ENCODE measurements at regions of chr19 and their contacts with region 1.

Region 1: DNA sequence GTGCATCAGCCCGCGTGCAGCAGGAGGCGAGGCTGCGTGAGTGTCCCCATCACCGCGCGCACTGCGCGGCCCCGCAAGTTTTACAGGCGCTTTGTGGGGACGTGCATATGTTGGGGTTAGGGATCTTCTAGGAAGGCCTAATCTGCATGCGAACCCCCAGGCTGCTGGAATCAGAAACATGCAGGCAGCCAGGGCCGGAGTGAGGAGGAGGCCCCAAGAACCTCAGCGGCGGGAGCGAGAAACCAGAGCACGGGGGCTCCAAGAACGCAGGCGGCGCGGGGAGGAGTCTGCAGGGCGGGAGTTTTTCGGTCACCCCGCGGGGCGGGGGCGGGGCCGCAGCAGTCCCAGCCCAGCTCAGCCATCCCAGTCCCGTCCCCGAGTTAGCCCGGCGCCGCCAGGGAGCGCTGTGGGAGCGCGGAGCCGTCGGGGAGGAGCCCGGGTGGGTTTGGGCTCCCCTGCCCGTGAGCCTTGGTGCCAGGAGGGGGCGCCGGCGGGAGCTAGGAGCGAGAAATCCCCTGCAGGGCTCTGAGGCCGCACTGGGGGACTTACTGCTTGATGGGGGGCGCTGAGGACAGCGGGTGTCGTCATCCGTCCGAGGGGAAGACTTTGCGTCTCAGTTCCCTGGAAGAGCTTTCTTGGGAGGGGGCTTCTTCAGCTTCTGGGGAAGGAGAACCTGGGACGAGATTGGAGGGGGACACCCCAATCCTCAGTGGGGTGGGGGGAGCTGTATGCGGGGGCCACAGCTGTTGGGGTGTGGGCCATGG is 933 bp upstream of the NRTN start:
- DNase-seq: peak; percentile 95
- H3K4me3 Mint-ChIP-seq: peak overlapping the region; percentile 65
- H3K27ac Mint-ChIP-seq: no peak overlapping the region
- H3K4me1 Mint-ChIP-seq: peaks cover 27% of the 10 kb centered on the region
- H3K27me3 Mint-ChIP-seq: peaks cover 88% of the 10 kb centered on the region

Region 2: GRCh38 chr19:5827891-5828660 is 24.1 kb after region 1 on chr19:
- CTCF ChIA-PET with region 1: interaction called, 29 read pairs
- DNase-seq: peak; percentile 94
- H3K4me3 Mint-ChIP-seq: peak overlapping the region; percentile 99
- H3K27ac Mint-ChIP-seq: peak overlapping the region; percentile 99
- H3K4me1 Mint-ChIP-seq: peaks cover 18% of the 10 kb centered on the region
- H3K27me3 Mint-ChIP-seq: peaks cover 24% of the 10 kb centered on the region

Region 3: GRCh38 chr19:5904352-5905113 is 100.6 kb after region 1 on chr19 and contains the start of gene VMAC:
- CTCF ChIA-PET with region 1: interaction called, 22 read pairs
- DNase-seq: peak; percentile 100
- H3K4me3 Mint-ChIP-seq: peak within 1 kb of the TSS; percentile 91
- H3K27ac Mint-ChIP-seq: peak within 1 kb of the TSS; percentile 100
- H3K4me1 Mint-ChIP-seq: peaks cover 35% of the 10 kb centered on the region
- H3K27me3 Mint-ChIP-seq: no peaks in the 10 kb centered on the region

Region 4: DNA sequence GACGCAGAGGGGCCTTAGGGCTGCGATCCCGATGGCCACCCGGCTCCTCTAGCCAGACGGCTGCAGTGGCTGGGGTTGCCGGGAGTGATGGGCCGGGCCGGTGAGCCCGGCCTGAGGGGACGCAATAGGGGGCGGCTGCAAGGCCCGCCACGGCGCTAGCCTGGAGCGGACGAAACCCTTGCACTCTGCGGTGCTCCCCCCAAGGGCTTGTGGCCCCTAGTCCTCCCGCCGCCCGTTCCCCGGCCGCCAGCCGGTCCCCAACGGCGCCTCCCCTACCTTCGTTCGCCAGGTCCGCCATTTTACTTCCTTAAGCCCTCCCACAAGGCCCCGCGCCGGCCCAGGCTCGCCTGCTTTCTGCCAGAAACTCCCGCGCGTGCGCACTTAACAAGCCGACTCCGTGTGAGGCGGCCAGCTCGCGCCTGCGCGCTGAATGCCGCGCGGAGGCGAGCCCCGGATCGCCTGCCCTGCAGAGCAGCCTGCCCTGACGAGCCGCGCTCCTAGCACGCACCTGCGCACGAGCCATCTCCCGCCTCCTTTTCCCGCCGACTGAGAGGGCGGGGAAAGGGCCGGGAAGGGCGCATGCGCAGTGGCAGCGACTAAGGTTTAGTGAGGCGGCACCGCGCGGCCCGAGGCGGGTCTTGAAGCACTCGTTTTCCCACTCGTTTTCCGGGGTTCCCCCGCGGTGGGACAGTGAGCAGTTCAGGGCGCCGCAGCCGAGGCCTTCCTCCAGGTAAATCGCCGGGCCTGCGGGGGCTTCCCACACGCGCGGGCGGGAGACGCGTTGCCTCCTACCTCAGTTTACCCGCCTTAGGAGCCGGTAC is 174.1 kb after region 1 on chr19 and contains the start of gene RANBP3:
- CTCF ChIA-PET with region 1: interaction called, 13 read pairs
- DNase-seq: peak; percentile 98
- H3K4me3 Mint-ChIP-seq: peak within 1 kb of the TSS; percentile 98
- H3K27ac Mint-ChIP-seq: peak within 1 kb of the TSS; percentile 89
- H3K4me1 Mint-ChIP-seq: peaks cover 68% of the 10 kb centered on the region
- H3K27me3 Mint-ChIP-seq: peaks cover 5% of the 10 kb centered on the region

Region 5: GRCh38 chr19:6021878-6022569 is 218.1 kb after region 1 on chr19:
- CTCF ChIA-PET with region 1: interaction called, 45 read pairs
- DNase-seq: peak; percentile 88
- H3K4me3 Mint-ChIP-seq: no peak overlapping the region
- H3K27ac Mint-ChIP-seq: no peak overlapping the region
- H3K4me1 Mint-ChIP-seq: peaks cover 11% of the 10 kb centered on the region
- H3K27me3 Mint-ChIP-seq: peaks cover 14% of the 10 kb centered on the region